B cell (primary cell): ENCODE measurements at regions of chr5 and their contacts with region 1.

Region 1: GRCh38 chr5:124001036-124001615 is 489.1 kb downstream of the CSNK1G3 start:
- DNase-seq: no peak
- ATAC-seq: no peak
- H3K4me3 ChIP-seq: no peak overlapping the region
- H3K4me3 Mint-ChIP-seq: no peak overlapping the region
- H3K27ac ChIP-seq: no peak overlapping the region
- H3K27ac Mint-ChIP-seq: no peak overlapping the region
- H3K4me1 ChIP-seq: no peaks in the 10 kb centered on the region
- H3K4me1 Mint-ChIP-seq: no peaks in the 10 kb centered on the region
- H3K27me3 ChIP-seq: no peaks in the 10 kb centered on the region
- H3K27me3 Mint-ChIP-seq: no peaks in the 10 kb centered on the region
- CTCF ChIP-seq: no peak

Region 2: GRCh38 chr5:124285071-124285470 is 283.9 kb after region 1 on chr5:
- CTCF ChIA-PET with region 1: no interaction called
- POLR2A ChIA-PET with region 1: interaction called, 10 read pairs
- intact Hi-C with region 1: no loop called
- DNase-seq: no peak
- ATAC-seq: no peak
- H3K4me3 ChIP-seq: no peak overlapping the region
- H3K4me3 Mint-ChIP-seq: no peak overlapping the region
- H3K27ac ChIP-seq: no peak overlapping the region
- H3K27ac Mint-ChIP-seq: no peak overlapping the region
- H3K4me1 ChIP-seq: no peaks in the 10 kb centered on the region
- H3K4me1 Mint-ChIP-seq: no peaks in the 10 kb centered on the region
- H3K27me3 ChIP-seq: no peaks in the 10 kb centered on the region
- H3K27me3 Mint-ChIP-seq: no peaks in the 10 kb centered on the region
- CTCF ChIP-seq: no peak